Upper lobe of right lung (tissue), 1 donor: ENCODE measurements at regions of chr6 and their contacts with region 1.

Region 1: GRCh38 chr6:167219967-167220512 is 62.3 kb upstream of the GPR31 start:
- DNase-seq: no peak
- ATAC-seq: no peak
- H3K4me3 ChIP-seq: no peak overlapping the region
- H3K27ac ChIP-seq: no peak overlapping the region
- H3K4me1 ChIP-seq: no peaks in the 10 kb centered on the region
- H3K27me3 ChIP-seq: no peaks in the 10 kb centered on the region
- CTCF ChIP-seq: no peak

Region 2: GRCh38 chr6:167130712-167131684 is 89.0 kb before region 1 on chr6:
- intact Hi-C with region 1: no loop called
- DNase-seq: no peak
- ATAC-seq: peak; percentile 65
- H3K4me3 ChIP-seq: no peak overlapping the region
- H3K27ac ChIP-seq: no peak overlapping the region
- H3K4me1 ChIP-seq: no peaks in the 10 kb centered on the region
- H3K27me3 ChIP-seq: no peaks in the 10 kb centered on the region
- CTCF ChIP-seq: no peak

Region 3: GRCh38 chr6:167285077-167285770 is 65.2 kb after region 1 on chr6:
- intact Hi-C with region 1: loop called (anchors 10 kb)
- DNase-seq: peak; percentile 66
- ATAC-seq: peak; percentile 26
- H3K4me3 ChIP-seq: no peak overlapping the region
- H3K27ac ChIP-seq: no peak overlapping the region
- H3K4me1 ChIP-seq: no peaks in the 10 kb centered on the region
- H3K27me3 ChIP-seq: no peaks in the 10 kb centered on the region
- CTCF ChIP-seq: no peak